ENCODE measurements at regions of chr18 and their contacts with region 1.

Region 1: GRCh38 chr18:3281456-3282400 is 19.8 kb downstream of the MYL12B start:
- DNase-seq: peak; percentile 79
- H3K4me3 Mint-ChIP-seq: no peak overlapping the region
- H3K27ac Mint-ChIP-seq: no peak overlapping the region
- H3K4me1 Mint-ChIP-seq: peaks cover 4% of the 10 kb centered on the region
- H3K27me3 Mint-ChIP-seq: peaks cover 3% of the 10 kb centered on the region

Region 2: GRCh38 chr18:3151399-3152264 is 130.1 kb before region 1 on chr18:
- intact Hi-C with region 1: no loop called
- DNase-seq: peak; percentile 64
- H3K4me3 Mint-ChIP-seq: no peak overlapping the region
- H3K27ac Mint-ChIP-seq: no peak overlapping the region
- H3K4me1 Mint-ChIP-seq: peaks cover 6% of the 10 kb centered on the region
- H3K27me3 Mint-ChIP-seq: peaks cover 6% of the 10 kb centered on the region

Region 3: DNA sequence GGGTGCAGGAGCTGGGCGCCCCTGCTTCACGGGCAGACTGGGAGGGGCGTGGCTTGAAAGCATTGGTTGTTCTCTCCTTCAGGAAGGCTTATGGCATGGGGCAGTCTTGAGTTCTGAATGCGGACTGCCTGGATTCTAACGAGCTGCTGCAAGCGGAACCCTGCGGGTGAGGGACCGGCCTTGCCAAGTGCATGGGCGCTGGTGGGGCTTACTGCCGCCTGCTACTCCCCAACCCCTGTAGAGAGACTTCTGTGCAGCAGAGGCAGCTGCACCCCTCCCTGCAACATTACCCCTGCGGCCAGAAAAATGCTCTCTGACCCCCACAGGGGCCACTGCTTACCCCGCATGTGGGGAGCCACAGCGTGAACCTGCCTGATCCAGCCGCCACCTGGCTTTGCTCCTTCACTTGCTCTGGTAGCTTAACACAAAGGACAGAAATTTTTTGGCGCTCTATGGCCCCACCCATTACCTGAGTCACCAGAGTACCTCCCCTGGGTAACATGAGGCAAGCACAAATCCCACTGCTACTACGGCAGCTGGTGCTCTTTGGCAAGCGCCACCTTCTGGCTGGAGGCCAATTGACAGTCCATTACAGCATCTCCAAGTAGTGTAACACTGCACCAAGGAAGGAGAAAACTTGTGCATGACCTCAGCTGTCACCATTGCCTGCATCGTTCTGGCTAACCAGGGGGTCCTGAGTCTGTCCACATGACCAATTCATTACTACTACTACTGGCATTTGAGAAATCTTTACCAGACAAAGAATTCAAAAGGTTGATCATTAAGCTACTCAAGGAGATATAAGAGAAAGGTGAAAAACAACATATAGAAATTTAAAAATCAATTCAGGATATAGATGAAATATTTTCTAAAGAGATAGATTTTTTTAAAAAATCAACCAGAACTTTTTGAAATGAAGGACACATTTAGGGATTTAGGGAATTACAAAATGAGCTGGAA is 15.6 kb after region 1 on chr18:
- intact Hi-C with region 1: loop called (anchors 1 kb)
- DNase-seq: peak; percentile 98
- H3K4me3 Mint-ChIP-seq: peak overlapping the region; percentile 93
- H3K27ac Mint-ChIP-seq: peak overlapping the region; percentile 82
- H3K4me1 Mint-ChIP-seq: peaks cover 11% of the 10 kb centered on the region
- H3K27me3 Mint-ChIP-seq: peaks cover 32% of the 10 kb centered on the region

Region 4: DNA sequence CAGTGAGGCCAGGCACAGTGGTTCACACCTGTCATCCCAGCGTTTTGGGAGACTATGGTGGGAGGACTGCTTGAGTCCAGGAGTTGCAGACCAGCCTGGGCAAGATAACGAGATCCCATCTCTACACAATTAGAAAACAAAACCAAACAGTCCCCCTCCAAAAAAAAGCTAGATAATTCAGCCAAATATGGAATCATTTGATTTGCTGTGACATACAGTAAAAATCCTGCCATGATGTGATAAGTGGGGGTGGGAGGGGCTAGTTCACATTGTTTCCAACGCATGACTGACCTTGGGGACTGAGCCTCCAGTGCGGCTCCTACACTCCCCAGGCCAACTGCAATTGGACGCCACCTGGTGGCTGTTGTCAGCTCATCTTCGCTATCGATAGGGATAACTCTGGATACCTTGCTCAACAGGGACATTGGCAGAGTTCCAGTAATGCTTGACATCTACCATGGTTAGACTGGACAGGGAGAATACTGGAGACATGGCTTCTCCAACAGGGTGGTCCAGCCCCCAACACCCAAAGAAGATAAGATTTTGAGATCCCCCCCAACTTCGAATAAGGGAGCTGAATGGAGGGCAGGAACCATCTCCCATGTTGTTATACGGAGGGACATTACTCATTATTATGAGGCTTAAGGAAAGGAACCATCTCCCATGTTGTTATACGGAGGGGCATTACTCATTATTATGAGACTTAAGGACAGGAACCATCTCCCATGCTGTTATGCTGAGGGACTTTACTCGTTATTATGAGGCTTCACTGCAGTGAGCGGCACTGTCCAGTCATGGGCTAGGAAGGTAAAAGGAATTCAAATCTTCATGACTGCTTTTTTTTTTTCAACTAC is 304.2 kb after region 1 on chr18:
- intact Hi-C with region 1: loop called (anchors 1 kb)
- DNase-seq: peak; percentile 90
- H3K4me3 Mint-ChIP-seq: no peak overlapping the region
- H3K27ac Mint-ChIP-seq: peak overlapping the region; percentile 84
- H3K4me1 Mint-ChIP-seq: peaks cover 36% of the 10 kb centered on the region
- H3K27me3 Mint-ChIP-seq: no peaks in the 10 kb centered on the region

Region 5: GRCh38 chr18:3665780-3666525 is 384.2 kb after region 1 on chr18:
- intact Hi-C with region 1: loop called (anchors 1 kb)
- DNase-seq: peak; percentile 92
- H3K4me3 Mint-ChIP-seq: peak overlapping the region; percentile 61
- H3K27ac Mint-ChIP-seq: peak overlapping the region; percentile 53
- H3K4me1 Mint-ChIP-seq: peaks cover 33% of the 10 kb centered on the region
- H3K27me3 Mint-ChIP-seq: peaks cover 9% of the 10 kb centered on the region

Region 6: DNA sequence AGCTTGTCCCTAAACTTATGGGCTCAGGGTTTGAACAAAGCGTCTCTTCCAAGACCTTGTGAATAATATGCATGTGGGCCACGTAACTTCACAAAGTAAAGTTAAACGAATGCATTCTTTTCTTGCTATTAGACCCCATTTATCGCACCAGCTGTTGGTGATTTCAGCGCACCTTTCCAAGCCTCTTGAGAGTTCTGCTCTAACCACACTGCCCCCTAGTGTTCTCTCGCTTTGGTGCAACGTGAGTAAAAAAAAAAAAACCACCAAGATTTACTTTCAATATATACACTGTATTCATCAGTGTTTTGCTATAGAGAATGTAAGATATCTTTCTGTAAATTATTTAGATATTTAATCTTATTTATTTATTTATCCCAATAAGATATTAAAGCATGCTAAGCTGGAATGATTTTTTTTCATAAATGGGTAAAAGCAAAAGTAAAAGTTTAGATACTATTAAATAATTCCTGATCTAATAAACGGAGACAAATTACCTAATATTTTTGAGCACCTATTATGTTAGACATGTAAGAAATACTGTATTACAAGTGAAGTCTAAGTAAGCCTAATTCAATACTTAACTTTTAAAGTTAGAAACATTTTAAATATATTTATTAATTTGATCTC is 713.9 kb after region 1 on chr18:
- intact Hi-C with region 1: loop called (anchors 5 kb)
- DNase-seq: peak; percentile 90
- H3K4me3 Mint-ChIP-seq: no peak overlapping the region
- H3K27ac Mint-ChIP-seq: no peak overlapping the region
- H3K4me1 Mint-ChIP-seq: peaks cover 3% of the 10 kb centered on the region
- H3K27me3 Mint-ChIP-seq: peaks cover 15% of the 10 kb centered on the region

Measured in activated CD4-positive, alpha-beta T cell treated with anti-CD3 and anti-CD28 coated beads, Interleukin-2, amount 10 ng/mL, durations not matched to agents 24 days and 14 days (primary cell).